AG04449 (cell line): ENCODE measurements at regions of chr9 and their contacts with region 1.

Region 1: DNA sequence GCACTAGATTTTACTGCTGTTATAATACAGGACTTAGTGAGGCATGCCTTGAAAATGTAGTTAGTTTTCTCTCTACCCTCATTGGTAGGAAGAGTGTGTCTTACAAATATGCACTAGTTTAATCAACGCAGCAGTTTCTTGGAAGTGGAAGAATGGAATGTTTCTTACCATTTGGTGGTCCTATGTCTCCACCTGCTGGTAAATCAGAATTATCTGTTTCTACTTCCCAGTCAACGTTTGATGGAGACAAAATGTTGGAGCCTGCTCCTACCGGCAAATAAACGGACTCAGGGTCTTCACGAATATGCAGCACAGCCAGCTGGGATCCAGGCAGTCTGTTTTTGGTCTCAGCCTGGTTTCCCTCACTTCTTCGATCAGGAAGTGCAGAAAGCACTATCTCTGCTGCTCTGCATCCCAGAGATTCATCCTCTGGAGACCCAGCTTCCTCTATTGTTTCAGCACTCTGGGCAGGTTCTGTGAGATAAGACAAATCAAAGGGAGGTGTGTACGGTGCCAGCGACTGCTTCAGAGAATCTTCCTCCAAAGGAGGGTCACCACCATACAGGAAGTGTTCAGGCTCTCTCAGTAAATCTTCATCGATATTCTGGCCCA is 59.5 kb upstream of the PCA3 start:
- DNase-seq: peak; percentile 86
- H3K4me3 ChIP-seq: no peak overlapping the region
- CTCF ChIP-seq: peak; percentile 40

Region 2: GRCh38 chr9:76393963-76394679 is 310.6 kb before region 1 on chr9 and contains the start of gene RFK:
- CTCF ChIA-PET with region 1: interaction called, 72 read pairs
- POLR2A ChIA-PET with region 1: no interaction called
- DNase-seq: peak; percentile 36
- H3K4me3 ChIP-seq: peak within 1 kb of the TSS; percentile 89
- CTCF ChIP-seq: peak; percentile 60

Region 3: DNA sequence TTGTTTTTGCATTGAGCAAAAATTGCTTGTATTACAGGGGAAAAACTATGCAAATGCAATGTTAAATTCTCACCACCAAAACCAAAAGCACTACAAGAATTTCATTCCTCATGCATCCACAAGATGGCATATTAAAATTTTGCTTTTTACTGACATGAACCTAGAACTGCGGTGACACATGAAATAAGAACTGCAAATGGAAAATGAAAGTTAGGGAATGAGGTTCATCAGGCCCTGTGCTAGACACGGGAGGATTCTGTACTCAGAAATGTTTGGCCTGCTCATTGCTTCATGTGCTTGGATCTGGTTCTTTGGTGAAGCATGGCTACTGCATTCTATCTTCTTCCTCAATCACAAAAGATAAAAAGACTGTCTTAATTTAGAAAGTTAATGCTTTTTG is 301.3 kb before region 1 on chr9:
- CTCF ChIA-PET with region 1: interaction called, 72 read pairs
- POLR2A ChIA-PET with region 1: no interaction called
- DNase-seq: peak; percentile 64
- H3K4me3 ChIP-seq: no peak overlapping the region
- CTCF ChIP-seq: peak; percentile 43

Region 4: GRCh38 chr9:76419782-76420380 is 284.8 kb before region 1 on chr9:
- CTCF ChIA-PET with region 1: interaction called, 11 read pairs
- POLR2A ChIA-PET with region 1: no interaction called
- DNase-seq: no peak
- H3K4me3 ChIP-seq: no peak overlapping the region
- CTCF ChIP-seq: peak; percentile 44

Region 5: DNA sequence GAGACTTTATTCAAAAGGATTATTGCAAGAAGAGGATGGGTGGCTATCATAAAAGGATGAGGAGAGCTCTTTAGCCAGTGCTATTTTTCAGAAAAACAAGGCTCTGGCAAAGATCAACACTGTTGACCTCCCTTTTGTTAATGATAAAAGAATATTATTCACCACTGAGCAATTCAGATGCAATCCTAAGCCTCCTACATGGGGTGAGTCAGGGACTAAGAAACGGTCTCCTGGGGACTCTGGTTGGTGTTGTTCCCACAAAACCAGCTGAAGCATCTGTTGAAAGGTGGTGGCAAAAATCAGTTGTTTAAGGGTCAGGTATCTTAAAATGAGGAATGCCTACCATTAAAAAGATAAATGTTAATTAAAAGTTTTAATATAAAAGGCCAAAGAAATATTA is 253.5 kb before region 1 on chr9:
- CTCF ChIA-PET with region 1: interaction called, 103 read pairs
- POLR2A ChIA-PET with region 1: no interaction called
- DNase-seq: no peak
- H3K4me3 ChIP-seq: no peak overlapping the region
- CTCF ChIP-seq: no peak

Region 6: GRCh38 chr9:76732341-76732958 is 27.8 kb after region 1 on chr9:
- CTCF ChIA-PET with region 1: no interaction called
- POLR2A ChIA-PET with region 1: no interaction called
- DNase-seq: peak; percentile 50
- H3K4me3 ChIP-seq: no peak overlapping the region
- CTCF ChIP-seq: no peak